ENCODE measurements at regions of chr2 and their contacts with region 1.

Region 1: DNA sequence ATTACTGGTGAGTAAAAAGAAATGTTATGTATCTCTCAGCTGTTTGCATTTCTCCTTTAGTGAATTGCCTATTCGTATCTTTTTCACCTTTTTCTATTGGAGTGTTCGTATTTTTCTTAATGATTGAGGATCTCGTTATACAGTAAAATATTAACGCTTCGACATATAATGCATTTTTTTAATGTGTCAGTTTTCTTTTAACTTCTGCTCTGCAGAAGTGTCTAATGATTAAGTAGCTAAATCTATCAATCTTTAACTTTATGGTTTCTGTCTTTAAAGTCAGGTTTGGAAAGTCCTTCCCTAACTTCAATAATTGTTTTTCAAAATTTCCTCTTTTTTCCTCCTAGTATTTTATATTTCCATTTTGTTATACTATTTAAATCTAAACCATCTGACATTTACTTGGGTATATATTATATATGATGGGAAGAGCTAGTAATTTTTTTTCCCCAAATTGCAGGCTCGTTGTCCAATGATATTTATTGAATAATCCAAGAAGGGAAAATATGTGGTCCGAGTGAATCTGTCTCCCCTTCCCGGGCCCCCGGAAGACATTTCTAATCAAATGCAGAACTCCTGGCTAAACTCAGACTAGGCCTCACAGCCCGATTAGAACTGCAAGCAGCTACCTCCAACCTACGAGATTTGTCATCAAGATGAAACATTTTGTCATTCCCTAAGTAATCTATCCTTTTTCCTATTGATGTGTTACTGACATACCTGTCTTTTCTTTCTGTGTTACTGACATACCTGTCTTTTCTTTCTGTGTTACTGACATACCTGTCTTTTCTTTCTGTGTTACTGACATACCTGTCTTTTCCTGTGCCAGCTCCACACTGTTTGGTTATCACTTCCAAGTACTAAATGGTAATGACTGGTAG is 17.2 kb downstream of the PCBP1 start:
- DNase-seq: peak in 4 of 14 experiments; percentile 38 to 70 (median 55)
- ATAC-seq: no peak
- H3K4me3 ChIP-seq: peak overlapping the region; percentile 18
- H3K4me3 Mint-ChIP-seq: peak overlapping the region; percentile 83
- H3K27ac ChIP-seq: peak overlapping the region; percentile 66 to 70
- H3K27ac Mint-ChIP-seq: peak overlapping the region; percentile 96
- H3K4me1 ChIP-seq: peaks cover 41% of the 10 kb centered on the region
- H3K4me1 Mint-ChIP-seq: peaks cover 52% of the 10 kb centered on the region
- H3K27me3 ChIP-seq: no peaks in the 10 kb centered on the region
- H3K27me3 Mint-ChIP-seq: no peaks in the 10 kb centered on the region
- CTCF ChIP-seq: no peak

Region 2: GRCh38 chr2:70115646-70116442 is 11.4 kb after region 1 on chr2:
- CTCF ChIA-PET with region 1: no interaction called
- POLR2A ChIA-PET with region 1: interaction called, 232 read pairs
- intact Hi-C with region 1: no loop called
- DNase-seq: peak in 3 of 14 experiments; percentile 47 to 55 (median 54)
- ATAC-seq: peak; percentile 48
- H3K4me3 ChIP-seq: no peak overlapping the region
- H3K4me3 Mint-ChIP-seq: peak overlapping the region; percentile 65
- H3K27ac ChIP-seq: no peak overlapping the region
- H3K27ac Mint-ChIP-seq: peak overlapping the region; percentile 64
- H3K4me1 ChIP-seq: peaks cover 44% of the 10 kb centered on the region
- H3K4me1 Mint-ChIP-seq: peaks cover 62% of the 10 kb centered on the region
- H3K27me3 ChIP-seq: no peaks in the 10 kb centered on the region
- H3K27me3 Mint-ChIP-seq: no peaks in the 10 kb centered on the region
- CTCF ChIP-seq: no peak

Region 3: GRCh38 chr2:70124983-70125480 is 20.6 kb after region 1 on chr2:
- CTCF ChIA-PET with region 1: interaction called, 8 read pairs
- POLR2A ChIA-PET with region 1: interaction called, 232 read pairs
- intact Hi-C with region 1: loop called in 1 of 2 experiments (anchors 2 kb)
- DNase-seq: peak; percentile 57 to 88 (median 62)
- ATAC-seq: peak; percentile 59
- H3K4me3 ChIP-seq: peak overlapping the region; percentile 83
- H3K4me3 Mint-ChIP-seq: peak overlapping the region; percentile 93
- H3K27ac ChIP-seq: peak overlapping the region; percentile 92 to 99
- H3K27ac Mint-ChIP-seq: peak overlapping the region; percentile 99
- H3K4me1 ChIP-seq: peaks cover 72% of the 10 kb centered on the region
- H3K4me1 Mint-ChIP-seq: peaks cover 76% of the 10 kb centered on the region
- H3K27me3 ChIP-seq: no peaks in the 10 kb centered on the region
- H3K27me3 Mint-ChIP-seq: no peaks in the 10 kb centered on the region
- CTCF ChIP-seq: no peak

Region 4: DNA sequence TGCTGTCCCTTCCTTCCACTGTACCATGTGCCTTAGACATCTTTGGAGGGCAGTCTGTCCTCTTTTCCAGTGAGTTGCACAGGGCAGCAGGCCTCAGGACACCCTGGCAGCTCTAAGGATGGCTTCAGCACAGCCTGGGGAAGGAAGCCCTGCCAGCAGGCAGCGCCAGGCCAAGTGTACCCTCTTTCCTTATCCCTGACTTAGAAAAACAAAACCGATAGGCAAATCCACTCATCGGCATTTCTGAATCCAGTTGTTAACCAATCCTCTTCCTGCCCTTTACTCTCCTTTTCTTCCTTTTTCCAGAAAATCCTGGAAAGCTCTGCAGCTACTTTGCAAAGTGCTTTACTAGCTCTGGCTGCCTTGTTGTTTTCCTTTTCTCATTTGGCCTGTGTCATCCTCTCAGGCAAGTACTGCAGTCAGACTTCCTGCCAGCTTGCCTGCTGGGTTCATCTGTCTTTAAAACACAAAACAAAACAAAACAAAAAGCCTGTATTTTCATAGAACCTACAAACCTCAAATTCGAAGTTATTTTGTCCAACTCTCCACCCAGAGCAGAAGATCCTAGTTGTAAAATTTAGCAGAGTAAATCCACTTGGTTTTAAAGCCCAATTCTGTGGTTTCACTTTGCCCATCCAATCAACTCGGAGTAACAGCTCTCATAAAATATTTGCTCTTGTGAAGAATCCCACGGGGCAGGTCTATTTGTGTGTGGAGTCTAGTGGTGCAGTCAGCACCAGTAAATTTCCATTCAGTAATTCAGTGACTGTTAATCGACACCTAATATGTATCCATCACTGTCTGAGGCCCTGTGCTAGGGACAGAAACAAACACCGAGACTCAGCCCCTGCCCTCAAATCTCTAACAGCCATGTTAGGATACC is 28.0 kb after region 1 on chr2:
- CTCF ChIA-PET with region 1: interaction called, 3 read pairs
- POLR2A ChIA-PET with region 1: interaction called, 232 read pairs
- intact Hi-C with region 1: no loop called
- DNase-seq: peak in 8 of 14 experiments; percentile 34 to 80 (median 60)
- ATAC-seq: peak; percentile 62
- H3K4me3 ChIP-seq: peak overlapping the region; percentile 54
- H3K4me3 Mint-ChIP-seq: peak overlapping the region; percentile 83
- H3K27ac ChIP-seq: peak overlapping the region; percentile 76 to 84
- H3K27ac Mint-ChIP-seq: peak overlapping the region; percentile 96
- H3K4me1 ChIP-seq: peaks cover 88% of the 10 kb centered on the region
- H3K4me1 Mint-ChIP-seq: peaks cover 72% of the 10 kb centered on the region
- H3K27me3 ChIP-seq: no peaks in the 10 kb centered on the region
- H3K27me3 Mint-ChIP-seq: no peaks in the 10 kb centered on the region
- CTCF ChIP-seq: no peak

Region 5: DNA sequence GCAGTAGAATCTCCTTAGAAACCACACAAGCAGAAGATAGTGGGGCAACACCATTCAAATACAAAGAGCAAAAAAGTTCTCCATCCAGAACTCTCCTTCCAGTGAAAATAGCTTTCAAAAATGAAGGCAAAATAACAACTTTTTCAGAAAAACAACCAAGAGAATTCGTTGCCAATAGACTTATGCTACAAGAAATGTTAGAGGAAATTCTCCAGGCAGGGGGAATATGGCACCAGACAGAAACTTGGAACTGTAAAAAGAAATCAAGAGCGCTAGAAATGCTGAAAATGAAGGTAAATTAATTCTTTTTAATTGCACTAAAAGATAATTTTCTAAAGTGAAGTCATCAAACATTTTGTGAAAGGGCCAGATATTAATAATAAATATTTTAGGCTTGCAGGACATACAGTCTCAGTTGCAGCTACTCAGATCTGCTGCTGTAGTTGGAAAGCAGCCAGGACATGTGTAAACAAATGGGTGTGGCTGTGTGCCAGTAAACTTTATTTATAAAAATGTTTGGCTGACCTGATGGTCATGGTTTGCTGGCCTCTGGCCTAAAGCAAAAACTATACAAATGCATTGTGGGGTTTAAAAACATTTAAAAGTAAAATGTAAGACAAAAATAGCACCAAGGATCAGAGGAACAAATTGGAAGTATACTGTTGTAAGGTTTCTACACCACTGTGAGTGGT is 522.9 kb after region 1 on chr2:
- CTCF ChIA-PET with region 1: no interaction called
- POLR2A ChIA-PET with region 1: no interaction called
- intact Hi-C with region 1: no loop called
- DNase-seq: no peak
- ATAC-seq: no peak
- H3K4me3 ChIP-seq: no peak overlapping the region
- H3K4me3 Mint-ChIP-seq: no peak overlapping the region
- H3K27ac ChIP-seq: no peak overlapping the region
- H3K27ac Mint-ChIP-seq: no peak overlapping the region
- H3K4me1 ChIP-seq: no peaks in the 10 kb centered on the region
- H3K4me1 Mint-ChIP-seq: no peaks in the 10 kb centered on the region
- H3K27me3 ChIP-seq: no peaks in the 10 kb centered on the region
- H3K27me3 Mint-ChIP-seq: no peaks in the 10 kb centered on the region
- CTCF ChIP-seq: no peak

Region 6: DNA sequence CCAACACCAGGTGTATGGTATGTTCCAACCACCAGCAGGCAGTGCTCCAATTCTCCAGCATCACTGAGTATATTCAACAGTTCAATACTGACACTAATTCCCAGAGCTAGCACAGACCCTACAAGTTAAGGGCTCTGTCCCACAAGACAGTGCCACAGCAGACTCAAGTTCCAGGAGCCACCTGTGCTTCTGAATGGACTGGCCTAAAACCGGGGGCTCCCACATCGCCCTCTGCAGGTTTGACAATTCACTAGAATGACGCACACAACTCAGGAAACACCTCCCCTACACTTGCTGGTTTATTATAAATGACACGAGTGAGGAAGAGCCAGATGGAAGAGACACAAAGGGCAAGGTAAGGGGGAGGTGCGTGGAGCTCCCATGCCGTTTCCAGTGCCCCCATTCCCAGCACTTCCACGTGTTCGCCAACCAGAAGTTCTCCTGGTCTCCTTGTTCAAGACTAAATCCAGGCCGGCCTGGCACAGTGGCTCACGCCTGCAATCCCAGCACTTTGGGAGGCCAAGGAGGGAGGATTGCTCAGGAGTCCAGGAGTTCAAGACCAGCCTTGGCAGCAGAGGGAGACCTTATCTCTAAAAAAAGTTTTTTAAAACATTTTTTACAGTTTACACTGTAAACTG is 819.0 kb after region 1 on chr2:
- CTCF ChIA-PET with region 1: no interaction called
- POLR2A ChIA-PET with region 1: no interaction called
- intact Hi-C with region 1: no loop called
- DNase-seq: peak in 1 of 14 experiments; percentile 30
- ATAC-seq: no peak
- H3K4me3 ChIP-seq: no peak overlapping the region
- H3K4me3 Mint-ChIP-seq: no peak overlapping the region
- H3K27ac ChIP-seq: no peak overlapping the region
- H3K27ac Mint-ChIP-seq: no peak overlapping the region
- H3K4me1 ChIP-seq: peaks cover 3% of the 10 kb centered on the region
- H3K4me1 Mint-ChIP-seq: no peaks in the 10 kb centered on the region
- H3K27me3 ChIP-seq: peaks cover under 1 to 2% of the 10 kb centered on the region in 2 experiments
- H3K27me3 Mint-ChIP-seq: peaks cover 18% of the 10 kb centered on the region
- CTCF ChIP-seq: no peak